ENCODE measurements at regions of chr12 and their contacts with region 1.

Region 1: DNA sequence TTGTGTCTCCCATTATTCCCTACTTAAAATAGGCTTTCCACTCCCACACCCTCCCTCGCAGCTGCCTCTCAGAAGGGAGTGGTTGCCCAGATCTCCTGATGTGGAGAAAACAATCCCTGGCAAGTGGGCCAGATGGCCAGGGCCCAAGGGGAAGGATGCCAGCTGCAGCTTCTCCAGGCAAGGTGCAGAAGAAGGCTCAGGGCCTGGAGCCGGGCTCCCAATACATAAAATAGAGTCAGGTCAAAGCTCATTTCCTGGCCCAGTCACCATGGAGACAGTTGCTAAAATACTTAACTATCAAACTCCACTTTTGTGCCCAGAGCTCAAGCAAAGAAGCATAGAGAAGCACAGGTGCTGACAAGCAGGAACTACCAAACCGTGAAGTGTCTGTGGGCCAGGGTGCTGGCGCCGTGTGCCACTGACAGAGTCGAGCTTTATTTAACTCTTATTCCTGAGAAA is 45.7 kb upstream of the ITPR2 start:
- DNase-seq: peak; percentile 87
- H3K4me3 ChIP-seq: peak overlapping the region; percentile 38
- H3K27ac ChIP-seq: peak overlapping the region; percentile 27
- H3K4me1 ChIP-seq: peaks cover 18% of the 10 kb centered on the region
- CTCF ChIP-seq: no peak

Region 2: GRCh38 chr12:26817183-26817591 is 61.5 kb before region 1 on chr12:
- CTCF ChIA-PET with region 1: no interaction called
- POLR2A ChIA-PET with region 1: no interaction called
- intact Hi-C with region 1: no loop called
- DNase-seq: peak; percentile 22
- H3K4me3 ChIP-seq: no peak overlapping the region
- H3K27ac ChIP-seq: no peak overlapping the region
- H3K4me1 ChIP-seq: peaks cover 9% of the 10 kb centered on the region
- CTCF ChIP-seq: no peak

Region 3: GRCh38 chr12:26853303-26854030 is 25.2 kb before region 1 on chr12:
- CTCF ChIA-PET with region 1: no interaction called
- POLR2A ChIA-PET with region 1: interaction called, 3 read pairs
- intact Hi-C with region 1: loop called (anchors 1 kb)
- DNase-seq: peak; percentile 84
- H3K4me3 ChIP-seq: peak overlapping the region; percentile 7
- H3K27ac ChIP-seq: no peak overlapping the region
- H3K4me1 ChIP-seq: peaks cover 23% of the 10 kb centered on the region
- CTCF ChIP-seq: peak; percentile 99

Region 4: GRCh38 chr12:26867080-26867479 is 11.6 kb before region 1 on chr12:
- CTCF ChIA-PET with region 1: no interaction called
- POLR2A ChIA-PET with region 1: interaction called, 10 read pairs
- intact Hi-C with region 1: no loop called
- DNase-seq: no peak
- H3K4me3 ChIP-seq: no peak overlapping the region
- H3K27ac ChIP-seq: no peak overlapping the region
- H3K4me1 ChIP-seq: peaks cover 5% of the 10 kb centered on the region
- CTCF ChIP-seq: no peak

Region 5: GRCh38 chr12:26906704-26907103 is 28.0 kb after region 1 on chr12:
- CTCF ChIA-PET with region 1: interaction called, 3 read pairs
- POLR2A ChIA-PET with region 1: interaction called, 10 read pairs
- intact Hi-C with region 1: no loop called
- DNase-seq: no peak
- H3K4me3 ChIP-seq: no peak overlapping the region
- H3K27ac ChIP-seq: no peak overlapping the region
- H3K4me1 ChIP-seq: peaks cover 8% of the 10 kb centered on the region
- CTCF ChIP-seq: no peak